ENCODE measurements at regions of chr19 and their contacts with region 1.

Region 1: DNA sequence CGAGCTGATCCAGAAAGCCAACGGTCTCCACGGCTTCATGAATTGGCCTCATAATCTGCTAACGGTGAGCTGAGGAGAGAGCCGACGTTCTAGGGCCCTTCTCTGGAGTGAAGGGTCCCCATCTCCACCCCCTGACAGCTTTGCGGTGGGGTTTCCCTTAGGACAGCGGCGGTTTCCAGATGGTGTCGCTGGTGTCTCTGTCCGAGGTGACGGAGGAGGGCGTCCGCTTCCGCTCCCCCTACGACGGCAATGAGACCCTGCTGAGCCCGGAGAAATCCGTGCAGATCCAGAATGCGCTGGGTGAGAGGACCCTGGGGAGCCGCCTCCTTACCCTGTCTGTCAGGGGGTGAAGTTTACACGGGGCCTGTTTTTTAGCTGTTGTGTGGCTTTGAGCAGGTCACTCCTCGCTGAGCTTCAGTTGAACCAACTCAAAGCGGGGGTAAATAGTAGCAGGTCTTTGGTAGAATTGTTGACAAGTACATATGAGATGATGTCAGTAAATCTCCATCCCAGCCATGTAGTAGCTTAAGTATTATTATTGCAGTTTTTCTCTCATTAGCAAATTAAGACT is 801 bp downstream of the QTRT1 start:
- DNase-seq: peak; percentile 57
- ATAC-seq: peak; percentile 56
- H3K4me3 Mint-ChIP-seq: peak overlapping the region; percentile 93
- H3K27ac Mint-ChIP-seq: peak overlapping the region; percentile 88
- H3K4me1 Mint-ChIP-seq: peaks cover 8% of the 10 kb centered on the region
- H3K27me3 Mint-ChIP-seq: peaks cover 2% of the 10 kb centered on the region
- CTCF ChIP-seq: no peak

Region 2: DNA sequence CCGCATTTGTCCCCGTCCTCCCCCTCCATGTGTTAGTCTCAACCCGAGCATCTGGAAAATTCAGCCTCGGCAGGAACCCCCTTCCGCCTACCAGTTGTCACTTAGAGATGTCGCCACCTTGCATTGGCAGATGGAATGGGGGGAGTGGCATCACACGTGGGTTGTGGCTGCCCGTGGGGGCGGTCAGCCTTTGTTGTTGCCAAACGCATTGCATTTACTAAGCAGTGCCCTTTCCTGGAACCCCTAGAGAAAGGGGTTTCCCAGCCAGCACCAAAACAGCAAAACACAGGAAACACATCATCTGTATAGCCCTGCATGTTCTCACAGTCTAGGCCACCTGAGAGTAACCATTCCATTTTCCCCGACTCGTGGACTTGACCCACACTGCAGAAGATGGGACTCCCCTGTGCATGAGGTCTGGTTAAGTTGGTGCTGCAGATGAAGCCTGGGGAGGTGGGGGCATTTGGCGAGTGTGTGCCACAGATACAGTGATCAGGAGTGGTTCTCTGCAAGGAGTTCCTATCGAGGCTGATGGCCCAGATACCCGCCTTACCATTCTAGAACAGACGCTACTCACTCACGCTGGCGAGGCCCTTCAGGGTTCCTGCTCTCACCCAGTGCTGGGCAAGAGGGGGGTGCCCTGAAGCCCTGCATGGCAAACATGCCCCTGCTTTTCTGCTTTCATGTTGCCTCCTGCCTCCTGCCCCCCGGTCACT is 95.7 kb after region 1 on chr19:
- CTCF ChIA-PET with region 1: no interaction called
- POLR2A ChIA-PET with region 1: no interaction called
- intact Hi-C with region 1: no loop called
- DNase-seq: peak; percentile 99
- ATAC-seq: peak; percentile 90
- H3K4me3 Mint-ChIP-seq: peak overlapping the region; percentile 64
- H3K27ac Mint-ChIP-seq: peak overlapping the region; percentile 96
- H3K4me1 Mint-ChIP-seq: peaks cover 32% of the 10 kb centered on the region
- H3K27me3 Mint-ChIP-seq: no peaks in the 10 kb centered on the region
- CTCF ChIP-seq: no peak

Region 3: GRCh38 chr19:10820173-10820572 is 118.1 kb after region 1 on chr19:
- CTCF ChIA-PET with region 1: interaction called, 12 read pairs
- POLR2A ChIA-PET with region 1: no interaction called
- intact Hi-C with region 1: no loop called
- DNase-seq: peak; percentile 24
- ATAC-seq: peak; percentile 64
- H3K4me3 Mint-ChIP-seq: no peak overlapping the region
- H3K27ac Mint-ChIP-seq: peak overlapping the region; percentile 77
- H3K4me1 Mint-ChIP-seq: peaks cover 6% of the 10 kb centered on the region
- H3K27me3 Mint-ChIP-seq: no peaks in the 10 kb centered on the region
- CTCF ChIP-seq: peak; percentile 30

Region 4: GRCh38 chr19:10899151-10899653 is 197.2 kb after region 1 on chr19:
- CTCF ChIA-PET with region 1: no interaction called
- POLR2A ChIA-PET with region 1: no interaction called
- intact Hi-C with region 1: no loop called
- DNase-seq: no peak
- ATAC-seq: no peak
- H3K4me3 Mint-ChIP-seq: no peak overlapping the region
- H3K27ac Mint-ChIP-seq: no peak overlapping the region
- H3K4me1 Mint-ChIP-seq: peaks cover 11% of the 10 kb centered on the region
- H3K27me3 Mint-ChIP-seq: no peaks in the 10 kb centered on the region
- CTCF ChIP-seq: no peak